Calu3 (cell line): ENCODE measurements at regions of chr18 and their contacts with region 1.

Region 1: GRCh38 chr18:21803495-21803894 is 62.9 kb downstream of the MIB1 start:
- DNase-seq: no peak
- H3K4me3 Mint-ChIP-seq: no peak overlapping the region
- H3K27ac Mint-ChIP-seq: peak overlapping the region; percentile 52
- H3K4me1 Mint-ChIP-seq: peaks cover 33% of the 10 kb centered on the region
- H3K27me3 Mint-ChIP-seq: no peaks in the 10 kb centered on the region
- CTCF ChIP-seq: no peak

Region 2: DNA sequence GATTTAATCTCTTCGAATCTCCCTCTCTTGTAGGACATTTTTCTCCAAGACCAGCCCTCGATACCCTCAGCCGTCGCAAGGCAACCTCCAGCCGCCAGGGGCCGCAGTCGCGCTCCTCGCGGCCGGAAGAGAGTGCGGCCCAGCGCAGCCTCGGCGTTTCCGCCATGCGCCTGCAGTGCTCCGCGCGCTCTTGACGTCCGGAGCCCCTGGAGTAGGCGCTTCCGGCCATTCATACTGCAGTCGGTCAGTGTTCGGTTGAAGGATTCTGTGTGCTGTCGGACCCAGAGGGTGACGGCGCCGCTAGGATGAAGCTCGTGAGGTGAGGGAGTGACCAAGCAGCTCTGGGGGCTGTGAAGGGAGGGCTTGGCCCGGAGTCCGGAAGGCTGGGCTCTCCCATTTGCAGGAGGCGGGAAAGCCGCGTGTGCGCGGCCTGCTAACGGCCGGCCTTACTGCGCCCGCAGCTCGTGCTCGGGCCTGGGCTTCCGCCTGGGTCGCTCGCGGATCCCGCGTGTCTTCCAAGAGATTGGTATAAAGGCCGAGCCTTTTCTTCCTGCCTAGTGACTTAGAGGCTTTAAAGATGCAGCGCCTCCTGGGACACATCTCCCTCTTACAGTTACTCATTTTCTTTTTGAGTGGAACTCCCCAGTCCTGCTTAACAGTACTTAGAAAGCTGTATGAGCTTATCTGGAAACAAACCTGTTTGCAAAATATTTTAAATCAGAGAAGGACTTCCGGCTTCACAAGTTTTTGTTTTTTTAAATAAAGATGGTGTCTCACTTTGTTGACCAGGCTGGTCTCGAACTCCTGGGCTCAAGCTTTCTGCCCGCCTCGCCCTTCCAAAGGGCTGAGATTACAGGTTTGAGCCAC is 191.1 kb before region 1 on chr18 and contains the start of gene SNRPD1:
- CTCF ChIA-PET with region 1: no interaction called
- intact Hi-C with region 1: no loop called
- DNase-seq: peak; percentile 95
- H3K4me3 Mint-ChIP-seq: peak within 1 kb of the TSS; percentile 86
- H3K27ac Mint-ChIP-seq: peak within 1 kb of the TSS; percentile 84
- H3K4me1 Mint-ChIP-seq: peaks cover 8% of the 10 kb centered on the region
- H3K27me3 Mint-ChIP-seq: no peaks in the 10 kb centered on the region
- CTCF ChIP-seq: peak; percentile 89
- total RNA-seq, gene SNRPD1: 107 and 112 TPM in 2 replicates

Region 3: DNA sequence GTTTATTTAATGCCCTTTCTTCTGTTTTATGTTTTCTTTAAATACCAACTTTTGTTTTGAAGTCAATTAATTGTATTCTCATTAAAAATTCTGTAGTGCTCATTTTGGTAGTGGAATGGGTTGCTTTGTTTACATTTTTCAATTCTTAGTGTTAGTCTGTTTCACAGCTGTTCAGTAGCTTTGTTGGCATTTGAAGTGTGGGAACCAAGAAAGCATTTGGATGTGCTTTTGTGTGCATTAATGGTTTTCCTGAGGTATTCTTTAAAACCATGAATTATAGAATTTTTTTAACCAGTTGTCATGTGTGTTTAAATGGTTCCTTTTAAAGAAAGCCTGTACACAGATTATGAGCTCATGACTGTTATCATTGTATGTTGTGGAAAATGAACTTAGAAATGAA is 43.2 kb before region 1 on chr18:
- CTCF ChIA-PET with region 1: no interaction called
- intact Hi-C with region 1: loop called (anchors 5 kb)
- DNase-seq: no peak
- H3K4me3 Mint-ChIP-seq: no peak overlapping the region
- H3K27ac Mint-ChIP-seq: no peak overlapping the region
- H3K4me1 Mint-ChIP-seq: peaks cover 9% of the 10 kb centered on the region
- H3K27me3 Mint-ChIP-seq: no peaks in the 10 kb centered on the region
- CTCF ChIP-seq: no peak

Region 4: GRCh38 chr18:21914739-21915319 is 111.3 kb after region 1 on chr18:
- CTCF ChIA-PET with region 1: no interaction called
- intact Hi-C with region 1: no loop called
- DNase-seq: peak; percentile 66
- H3K4me3 Mint-ChIP-seq: no peak overlapping the region
- H3K27ac Mint-ChIP-seq: no peak overlapping the region
- H3K4me1 Mint-ChIP-seq: no peaks in the 10 kb centered on the region
- H3K27me3 Mint-ChIP-seq: no peaks in the 10 kb centered on the region
- CTCF ChIP-seq: peak; percentile 81

Region 5: DNA sequence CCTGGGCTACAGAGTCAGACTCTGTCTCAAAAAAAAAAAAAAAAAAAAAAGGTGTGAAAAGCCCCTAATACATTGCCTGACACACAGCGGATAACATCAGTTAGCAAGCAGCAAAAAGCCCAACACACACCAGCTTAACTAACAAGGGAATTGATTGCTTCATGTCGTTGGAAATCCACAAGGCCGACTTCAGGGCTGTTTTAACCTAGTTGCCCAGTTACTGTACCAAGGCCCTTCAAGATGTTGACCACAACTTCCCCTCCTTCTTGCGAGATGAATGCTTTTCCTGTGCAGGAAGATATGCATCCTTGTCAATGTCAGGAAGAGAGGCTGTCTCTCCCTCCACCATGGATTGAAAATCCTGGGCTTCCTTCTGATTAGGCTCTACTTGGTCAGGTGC is 140.0 kb after region 1 on chr18:
- CTCF ChIA-PET with region 1: no interaction called
- intact Hi-C with region 1: no loop called
- DNase-seq: no peak
- H3K4me3 Mint-ChIP-seq: no peak overlapping the region
- H3K27ac Mint-ChIP-seq: no peak overlapping the region
- H3K4me1 Mint-ChIP-seq: no peaks in the 10 kb centered on the region
- H3K27me3 Mint-ChIP-seq: no peaks in the 10 kb centered on the region
- CTCF ChIP-seq: no peak